Heart left ventricle (tissue), 16 donors: ENCODE measurements at regions of chr16 and their contacts with region 1.

Region 1: GRCh38 chr16:67833418-67834241 is 8.5 kb upstream of the THAP11 start:
- DNase-seq: peak; percentile 94 to 98 (median 95)
- ATAC-seq: peak; percentile 96 to 99 (median 98)
- H3K4me3 ChIP-seq: peak overlapping the region; percentile 60 to 94 (median 81)
- H3K27ac ChIP-seq: peak overlapping the region in 11 of 12 donors; percentile 3 to 86 (median 71)
- H3K4me1 ChIP-seq: peaks cover 0 to 19% (median 14%) of the 10 kb centered on the region in 12 donors
- H3K27me3 ChIP-seq: no peaks in the 10 kb centered on the region
- CTCF ChIP-seq: peak in 1 of 12 donors; percentile 21
- POLR2A ChIP-seq: peak; percentile 45 to 63

Region 2: DNA sequence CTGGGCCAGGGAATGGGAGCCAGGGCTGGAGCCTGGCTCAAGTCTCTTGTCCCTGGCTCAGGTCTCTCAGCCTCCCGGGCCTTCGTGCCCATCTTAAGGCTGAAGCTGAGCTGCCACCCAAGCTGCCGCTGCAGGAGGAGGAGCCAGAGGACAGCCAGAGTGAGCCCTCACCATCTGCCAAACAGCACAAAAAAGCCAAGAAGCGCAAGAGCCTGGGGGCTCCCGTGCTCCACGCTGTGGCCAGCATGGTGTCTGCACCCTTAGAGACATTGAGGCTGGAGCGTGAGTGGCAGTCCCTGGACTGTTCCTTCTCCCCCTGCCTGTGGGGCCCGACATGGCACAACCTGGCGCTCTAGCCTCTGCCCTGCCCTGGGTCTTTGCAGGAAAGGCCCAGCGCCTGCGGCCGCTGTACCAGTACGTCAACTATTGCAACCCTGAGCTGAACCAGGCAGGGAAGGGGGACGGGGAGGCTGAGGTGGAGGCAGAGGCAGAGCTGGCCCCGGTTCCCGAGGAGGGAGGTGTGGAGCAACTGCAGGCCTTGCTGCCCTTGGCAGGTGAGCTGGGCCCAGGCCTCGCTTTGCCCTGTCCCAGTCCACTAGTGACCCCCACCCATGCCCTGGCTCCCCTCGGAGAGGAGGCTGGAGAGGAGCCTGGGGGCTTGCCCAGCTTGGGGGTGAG is 165.7 kb before region 1 on chr16:
- intact Hi-C with region 1: loop called in 3 of 10 experiments (anchors 5 to 10 kb)
- DNase-seq: peak; percentile 84 to 91 (median 89)
- ATAC-seq: peak; percentile 83 to 91 (median 85)
- H3K4me3 ChIP-seq: peak overlapping the region in 10 of 12 donors; percentile 65 to 94 (median 84)
- H3K27ac ChIP-seq: peak overlapping the region in 11 of 12 donors; percentile 85 to 94 (median 89)
- H3K4me1 ChIP-seq: peaks cover 5 to 39% (median 28%) of the 10 kb centered on the region in 12 donors
- H3K27me3 ChIP-seq: no peaks in the 10 kb centered on the region
- CTCF ChIP-seq: peak; percentile 66 to 94 (median 84)
- POLR2A ChIP-seq: peak in 1 of 2 donors; percentile 6

Region 3: DNA sequence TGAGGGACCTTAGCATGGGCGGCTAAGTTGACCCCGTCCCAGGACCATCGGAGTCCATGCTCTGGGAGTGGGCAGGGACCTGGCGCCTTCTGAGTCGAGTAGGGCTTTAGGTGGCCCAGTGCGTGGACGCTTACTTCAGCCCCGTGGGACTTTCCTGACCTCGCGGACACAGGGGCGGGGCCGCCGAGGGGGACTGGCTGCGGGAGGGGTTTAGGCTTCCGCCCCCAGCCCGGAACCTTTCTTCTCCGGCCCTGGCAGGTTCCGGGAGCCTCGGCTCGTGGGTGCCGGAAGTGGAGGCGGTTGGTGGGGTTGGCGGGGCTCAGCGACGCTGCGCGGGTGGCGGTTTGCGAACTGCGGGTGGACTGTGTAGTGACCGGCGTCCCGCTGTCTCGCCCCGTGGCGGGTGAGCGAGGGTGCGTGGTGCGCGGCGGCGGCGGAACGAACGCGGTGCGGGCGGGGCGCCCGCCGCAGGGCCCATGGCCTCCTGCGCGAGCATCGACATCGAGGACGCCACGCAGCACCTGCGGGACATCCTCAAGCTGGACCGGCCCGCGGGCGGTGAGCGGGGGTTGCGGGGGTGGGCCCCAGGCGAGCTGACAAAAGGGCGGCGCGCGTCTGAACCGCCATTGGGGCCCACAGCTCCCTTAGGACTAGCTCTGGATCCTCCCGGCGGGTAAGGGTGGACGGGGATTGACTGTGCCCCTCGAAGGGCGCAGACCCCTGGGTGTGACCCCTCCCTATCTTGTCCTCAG is 39.3 kb after region 1 on chr16 and contains the start of gene EDC4:
- intact Hi-C with region 1: loop called in 2 of 10 experiments (anchors 5 kb)
- DNase-seq: peak; percentile 87 to 93 (median 89)
- ATAC-seq: peak; percentile 87 to 94 (median 93)
- H3K4me3 ChIP-seq: peak within 1 kb of the TSS; percentile 67 to 99 (median 87)
- H3K27ac ChIP-seq: peak within 1 kb of the TSS; percentile 37 to 90 (median 81)
- H3K4me1 ChIP-seq: peaks cover 6 to 38% (median 28%) of the 10 kb centered on the region in 12 donors
- H3K27me3 ChIP-seq: no peaks in the 10 kb centered on the region
- CTCF ChIP-seq: no peak
- POLR2A ChIP-seq: peak in 1 of 2 donors; percentile 70
- total RNA-seq, gene EDC4: 26.2 to 42.5 (median 32.5) TPM

Region 4: DNA sequence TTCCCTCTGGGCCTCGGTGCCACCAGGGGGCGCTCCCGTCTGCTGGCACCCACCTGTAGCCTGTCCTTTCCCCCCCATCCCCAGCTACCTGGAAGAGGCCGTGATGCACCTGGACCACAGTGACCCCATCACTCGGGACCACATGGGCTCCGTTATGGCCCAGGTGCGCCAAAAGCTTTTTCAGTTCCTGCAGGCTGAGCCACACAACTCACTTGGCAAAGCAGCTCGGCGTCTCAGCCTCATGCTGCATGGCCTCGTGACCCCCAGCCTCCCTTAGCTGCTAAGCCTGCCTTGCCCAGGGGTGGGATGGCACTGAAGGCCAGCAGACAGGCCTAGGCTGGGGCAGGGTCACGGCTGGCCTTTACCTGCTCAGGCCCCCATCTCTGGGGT is 50.2 kb after region 1 on chr16:
- intact Hi-C with region 1: loop called in 1 of 10 experiments (anchors 5 kb)
- DNase-seq: peak; percentile 47 to 80 (median 49)
- ATAC-seq: peak in 3 of 4 donors; percentile 11 to 41 (median 38)
- H3K4me3 ChIP-seq: no peak overlapping the region
- H3K27ac ChIP-seq: peak overlapping the region in 11 of 12 donors; percentile 44 to 94 (median 81)
- H3K4me1 ChIP-seq: peaks cover 0 to 56% (median 32%) of the 10 kb centered on the region in 12 donors
- H3K27me3 ChIP-seq: no peaks in the 10 kb centered on the region
- CTCF ChIP-seq: peak; percentile 74 to 92 (median 83)
- POLR2A ChIP-seq: no peak

Region 5: GRCh38 chr16:67928561-67929364 is 95.1 kb after region 1 on chr16:
- intact Hi-C with region 1: loop called in 2 of 10 experiments (anchors 5 kb)
- DNase-seq: peak; percentile 63 to 86 (median 73)
- ATAC-seq: peak; percentile 37 to 69 (median 62)
- H3K4me3 ChIP-seq: no peak overlapping the region
- H3K27ac ChIP-seq: no peak overlapping the region
- H3K4me1 ChIP-seq: peaks cover 0 to 34% (median 15%) of the 10 kb centered on the region in 12 donors
- H3K27me3 ChIP-seq: no peaks in the 10 kb centered on the region
- CTCF ChIP-seq: peak; percentile 72 to 87 (median 83)
- POLR2A ChIP-seq: no peak